ENCODE measurements at regions of chr5 and their contacts with region 1.

Region 1: GRCh38 chr5:64505769-64506566 is at the start of gene RGS7BP:
- DNase-seq: peak; percentile 31 to 73 (median 48)
- ATAC-seq: peak; percentile 61 to 95 (median 88)
- H3K4me3 ChIP-seq: peak within 1 kb of the TSS; percentile 31 to 79 (median 58)
- H3K27ac ChIP-seq: peak within 1 kb of the TSS in 7 of 12 donors; percentile 8 to 65 (median 41)
- H3K4me1 ChIP-seq: peaks cover 0 to 25% (median 4%) of the 10 kb centered on the region in 12 donors
- H3K27me3 ChIP-seq: peaks cover 0 to 24% (median 0%) of the 10 kb centered on the region in 9 donors
- CTCF ChIP-seq: peak in 5 of 12 donors; percentile 12 to 52 (median 41)
- POLR2A ChIP-seq: no peak
- total RNA-seq, gene RGS7BP: 0.69 to 5.2 (median 2.1) TPM

Region 2: GRCh38 chr5:64158827-64159226 is 347.1 kb before region 1 on chr5:
- intact Hi-C with region 1: loop called in 1 of 10 experiments (anchors 10 kb)
- DNase-seq: no peak
- ATAC-seq: no peak
- H3K4me3 ChIP-seq: no peak overlapping the region
- H3K27ac ChIP-seq: no peak overlapping the region
- H3K4me1 ChIP-seq: peaks cover 0 to 4% (median 0%) of the 10 kb centered on the region in 12 donors
- H3K27me3 ChIP-seq: no peaks in the 10 kb centered on the region
- CTCF ChIP-seq: no peak
- POLR2A ChIP-seq: no peak

Region 3: DNA sequence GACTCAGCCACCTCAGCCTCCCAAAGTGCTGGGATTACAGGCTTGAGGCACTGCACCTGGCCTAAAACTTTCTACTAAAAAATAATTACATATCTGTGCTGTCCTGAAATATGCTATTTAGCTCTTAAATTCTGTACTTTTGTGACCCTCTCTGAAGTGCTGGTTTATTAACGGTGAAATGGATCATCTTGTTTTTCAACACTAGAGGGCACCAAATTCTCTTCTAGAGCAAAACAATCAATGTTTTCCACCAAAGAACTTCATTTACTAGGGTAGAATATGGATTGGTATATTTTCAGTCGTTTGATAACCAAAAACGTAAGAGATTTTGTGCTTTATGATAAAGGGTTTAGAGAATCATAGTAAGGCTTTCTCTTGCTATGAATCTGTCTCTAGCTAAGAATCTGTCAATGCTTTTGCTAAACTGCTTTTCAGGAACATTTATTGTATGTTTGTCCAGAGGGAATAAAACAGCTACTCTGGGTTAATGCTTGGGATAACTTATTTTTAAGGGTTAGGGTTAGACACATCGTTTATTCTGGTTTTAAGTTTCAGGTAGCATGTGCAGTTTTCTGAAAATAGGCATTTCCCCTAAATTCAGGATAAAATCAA is 276.7 kb before region 1 on chr5:
- intact Hi-C with region 1: loop called in 3 of 10 experiments (anchors 5 to 10 kb)
- DNase-seq: no peak
- ATAC-seq: no peak
- H3K4me3 ChIP-seq: no peak overlapping the region
- H3K27ac ChIP-seq: no peak overlapping the region
- H3K4me1 ChIP-seq: no peaks in the 10 kb centered on the region
- H3K27me3 ChIP-seq: no peaks in the 10 kb centered on the region
- CTCF ChIP-seq: peak; percentile 51 to 78 (median 61)
- POLR2A ChIP-seq: no peak

Region 4: GRCh38 chr5:64595031-64595855 is 89.3 kb after region 1 on chr5:
- intact Hi-C with region 1: loop called in 9 of 10 experiments (anchors 5 to 10 kb)
- DNase-seq: no peak
- ATAC-seq: peak; percentile 53 to 76 (median 65)
- H3K4me3 ChIP-seq: no peak overlapping the region
- H3K27ac ChIP-seq: no peak overlapping the region
- H3K4me1 ChIP-seq: peaks cover 0 to 13% (median 2%) of the 10 kb centered on the region in 12 donors
- H3K27me3 ChIP-seq: no peaks in the 10 kb centered on the region
- CTCF ChIP-seq: peak in 10 of 12 donors; percentile 9 to 54 (median 29)
- POLR2A ChIP-seq: no peak

Region 5: DNA sequence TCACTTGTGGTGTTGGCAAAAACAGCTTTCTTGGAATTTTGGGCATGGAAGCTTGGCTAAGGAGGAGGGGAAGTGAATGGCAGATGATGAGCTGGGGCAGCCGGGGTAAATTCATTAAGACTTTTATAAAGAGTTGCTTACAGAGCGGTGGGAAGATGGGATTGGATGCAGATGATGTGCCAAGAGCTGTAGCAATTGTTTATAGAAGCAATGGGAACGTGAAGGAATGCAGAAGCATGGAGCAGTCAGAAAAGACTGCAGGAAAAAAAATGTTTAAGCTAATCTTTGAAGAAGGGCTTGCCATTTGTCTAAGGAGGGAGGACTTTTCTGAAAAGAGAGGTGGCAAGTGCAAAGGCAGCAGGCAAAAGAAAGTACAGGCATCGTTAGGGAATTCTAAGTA is 97.7 kb after region 1 on chr5:
- intact Hi-C with region 1: loop called in 8 of 10 experiments (anchors 5 to 10 kb)
- DNase-seq: no peak
- ATAC-seq: no peak
- H3K4me3 ChIP-seq: no peak overlapping the region
- H3K27ac ChIP-seq: no peak overlapping the region
- H3K4me1 ChIP-seq: no peaks in the 10 kb centered on the region
- H3K27me3 ChIP-seq: no peaks in the 10 kb centered on the region
- CTCF ChIP-seq: no peak
- POLR2A ChIP-seq: no peak

Region 6: DNA sequence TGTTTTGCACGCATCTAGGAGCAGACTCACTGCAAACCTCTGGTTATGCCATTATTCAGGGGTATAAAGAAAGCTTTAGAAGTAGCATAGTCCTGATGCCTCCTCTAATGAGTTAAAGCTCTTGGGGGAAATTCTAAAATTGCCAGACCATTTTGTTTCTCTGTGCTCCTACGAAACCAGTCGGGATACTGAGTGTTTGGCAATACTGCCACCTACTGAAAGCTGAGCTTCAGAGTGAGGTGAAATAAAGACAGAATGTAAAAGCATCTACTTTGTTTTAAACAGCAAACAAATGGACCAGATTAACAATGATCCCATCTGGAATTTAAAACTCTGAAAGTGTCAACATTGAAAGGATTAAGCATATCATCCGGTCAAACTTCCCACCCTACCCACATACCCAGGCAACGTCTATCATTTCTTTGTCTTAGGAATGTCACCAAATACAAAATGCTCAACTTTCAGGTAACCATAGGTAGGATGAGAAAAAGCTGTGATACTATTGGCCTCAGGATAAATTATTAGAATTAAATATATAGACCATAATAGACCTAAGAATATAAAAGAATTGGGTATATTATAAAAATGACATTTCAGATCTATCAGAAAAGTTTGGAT is 106.5 kb after region 1 on chr5:
- intact Hi-C with region 1: loop called in 3 of 10 experiments (anchors 2 to 5 kb)
- DNase-seq: peak in 3 of 5 donors; percentile 28 to 40 (median 32)
- ATAC-seq: peak in 3 of 4 donors; percentile 60 to 68 (median 68)
- H3K4me3 ChIP-seq: no peak overlapping the region
- H3K27ac ChIP-seq: no peak overlapping the region
- H3K4me1 ChIP-seq: peaks cover 0 to 5% (median 0%) of the 10 kb centered on the region in 12 donors
- H3K27me3 ChIP-seq: no peaks in the 10 kb centered on the region
- CTCF ChIP-seq: peak; percentile 43 to 82 (median 73)
- POLR2A ChIP-seq: no peak

Measured in heart left ventricle (tissue), 16 donors.